SK-N-SH (cell line): ENCODE measurements at regions of chr9 and their contacts with region 1.

Region 1: GRCh38 chr9:89602978-89603766 is 1.6 kb upstream of the GADD45G start:
- DNase-seq: peak; percentile 70
- H3K4me3 ChIP-seq: peak overlapping the region; percentile 47 to 61
- H3K27ac ChIP-seq: peak overlapping the region in 1 of 2 experiments; percentile 93; a peak in 2 of 4 replicates
- H3K4me1 ChIP-seq: peaks cover 24 to 40% of the 10 kb centered on the region in 2 experiments
- H3K27me3 ChIP-seq: peaks cover 21% of the 10 kb centered on the region; the same call in 1 of the 2 replicates
- CTCF ChIP-seq: peak; percentile 92
- EP300 ChIP-seq: no peak
- RAD21 ChIP-seq: peak; percentile 98

Region 2: GRCh38 chr9:89701221-89701798 is 98.1 kb after region 1 on chr9:
- CTCF ChIA-PET with region 1: interaction called, 11 read pairs
- POLR2A ChIA-PET with region 1: interaction called, 5 read pairs
- DNase-seq: no peak
- H3K4me3 ChIP-seq: no peak overlapping the region
- H3K27ac ChIP-seq: no peak overlapping the region
- H3K4me1 ChIP-seq: peaks cover 0 to 10% of the 10 kb centered on the region in 2 experiments; a peak in 1 of 4 replicates
- H3K27me3 ChIP-seq: no peaks in the 10 kb centered on the region; the same call in 1 of the 2 replicates
- CTCF ChIP-seq: no peak
- EP300 ChIP-seq: no peak
- RAD21 ChIP-seq: no peak

Region 3: GRCh38 chr9:89755821-89756220 is 152.6 kb after region 1 on chr9:
- CTCF ChIA-PET with region 1: interaction called, 22 read pairs
- POLR2A ChIA-PET with region 1: interaction called, 17 read pairs
- DNase-seq: no peak
- H3K4me3 ChIP-seq: no peak overlapping the region
- H3K27ac ChIP-seq: no peak overlapping the region
- H3K4me1 ChIP-seq: peaks cover 0 to 26% of the 10 kb centered on the region in 2 experiments; a peak in 2 of 4 replicates
- H3K27me3 ChIP-seq: no peaks in the 10 kb centered on the region
- CTCF ChIP-seq: no peak
- EP300 ChIP-seq: no peak
- RAD21 ChIP-seq: no peak

Region 4: DNA sequence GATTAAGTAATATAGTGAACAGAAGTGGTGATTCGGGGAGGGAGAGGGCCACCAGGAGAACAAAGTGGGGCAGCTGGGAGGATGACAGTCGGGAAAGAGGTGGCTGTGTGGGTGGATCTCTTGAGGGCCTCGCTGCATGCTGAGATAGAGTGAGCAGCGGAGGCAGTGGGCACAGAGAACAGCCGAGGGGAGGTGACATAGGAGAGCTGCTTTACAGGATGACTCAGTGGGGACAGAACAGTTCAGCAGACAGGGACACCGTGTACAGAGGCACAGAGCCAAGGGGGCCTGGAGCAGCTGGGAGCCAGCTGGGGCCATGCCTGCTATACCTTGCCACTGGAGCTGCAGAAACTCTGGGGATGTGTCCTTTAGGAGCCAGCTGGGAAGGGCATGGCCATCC is 275.5 kb after region 1 on chr9:
- CTCF ChIA-PET with region 1: interaction called, 10 read pairs
- POLR2A ChIA-PET with region 1: interaction called, 7 read pairs
- DNase-seq: peak; percentile 49
- H3K4me3 ChIP-seq: no peak overlapping the region
- H3K27ac ChIP-seq: no peak overlapping the region
- H3K4me1 ChIP-seq: peaks cover 0 to 22% of the 10 kb centered on the region in 2 experiments; a peak in 1 of 4 replicates
- H3K27me3 ChIP-seq: no peaks in the 10 kb centered on the region
- CTCF ChIP-seq: no peak
- EP300 ChIP-seq: no peak
- RAD21 ChIP-seq: no peak

Region 5: DNA sequence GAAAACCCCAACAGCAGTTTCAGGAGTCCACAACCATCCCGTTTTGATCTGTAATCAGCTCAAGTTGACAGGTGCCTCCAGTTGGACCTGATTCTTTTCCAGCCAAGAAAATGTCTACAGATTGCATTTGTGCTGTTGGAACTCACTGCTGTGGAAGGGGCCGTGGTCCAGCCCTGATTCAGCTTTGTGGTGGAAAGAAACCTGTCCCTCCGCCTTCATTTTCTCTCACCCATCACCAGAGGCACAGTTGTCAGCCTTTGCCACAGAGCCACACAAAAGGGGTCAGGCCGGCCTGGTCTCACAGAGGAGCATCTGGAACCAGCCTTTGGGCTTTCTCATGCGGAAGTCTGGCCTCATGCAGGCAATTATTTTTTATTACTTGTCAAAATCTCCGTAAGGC is 485.3 kb after region 1 on chr9:
- CTCF ChIA-PET with region 1: interaction called, 288 read pairs
- POLR2A ChIA-PET with region 1: no interaction called
- DNase-seq: no peak
- H3K4me3 ChIP-seq: no peak overlapping the region
- H3K27ac ChIP-seq: no peak overlapping the region
- H3K4me1 ChIP-seq: no peaks in the 10 kb centered on the region; a peak in 1 of 4 replicates
- H3K27me3 ChIP-seq: no peaks in the 10 kb centered on the region
- CTCF ChIP-seq: no peak
- EP300 ChIP-seq: no peak
- RAD21 ChIP-seq: no peak

Region 6: GRCh38 chr9:90142580-90142979 is 539.4 kb after region 1 on chr9:
- CTCF ChIA-PET with region 1: interaction called, 22 read pairs
- POLR2A ChIA-PET with region 1: no interaction called
- DNase-seq: peak; percentile 24
- H3K4me3 ChIP-seq: no peak overlapping the region; a peak in 1 of 4 replicates
- H3K27ac ChIP-seq: no peak overlapping the region
- H3K4me1 ChIP-seq: no peaks in the 10 kb centered on the region; a peak in 1 of 4 replicates
- H3K27me3 ChIP-seq: no peaks in the 10 kb centered on the region
- CTCF ChIP-seq: peak; percentile 54
- EP300 ChIP-seq: no peak
- RAD21 ChIP-seq: peak; percentile 61